Posterior vena cava (tissue), 2 donors: ENCODE measurements at regions of chr6 and their contacts with region 1.

Region 1: DNA sequence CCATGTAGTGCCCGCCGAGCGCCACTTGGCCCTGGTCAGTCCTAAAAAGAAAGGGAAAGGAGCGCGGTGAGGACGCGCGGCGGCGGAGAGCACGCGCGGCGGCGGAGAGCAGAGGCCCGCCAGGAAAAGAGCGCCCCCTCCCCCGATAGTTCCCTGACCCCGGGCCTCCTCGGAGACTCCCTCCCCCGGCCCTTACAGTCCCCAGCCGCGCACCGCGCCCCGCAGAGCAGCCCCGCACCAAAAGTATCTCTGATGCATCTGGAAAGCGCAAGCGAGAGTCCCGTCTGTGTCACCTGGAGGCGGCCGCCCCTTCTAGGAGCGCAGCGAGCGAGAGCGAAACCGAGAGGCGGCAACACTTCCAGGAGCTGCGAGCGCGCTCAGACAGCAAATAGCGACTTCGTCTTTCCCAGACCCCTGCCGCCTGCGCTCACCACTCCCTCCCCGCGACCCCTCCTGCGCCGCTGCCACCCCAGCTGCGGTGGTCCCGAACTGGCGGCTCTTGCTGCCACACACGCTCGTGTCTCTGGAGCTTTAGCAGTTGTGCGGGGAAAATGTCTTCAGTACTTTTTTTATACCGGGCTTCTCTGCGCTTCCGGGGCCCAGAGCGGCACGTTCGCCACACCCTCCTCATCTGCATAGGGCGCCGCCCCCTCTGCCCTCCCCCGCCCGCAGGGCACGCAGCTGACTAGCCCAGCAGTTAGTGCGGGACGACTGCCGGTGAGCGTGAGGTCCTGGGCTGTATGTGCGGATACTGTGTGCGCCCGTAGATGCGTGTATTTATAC is at the start of gene TENT5A:
- DNase-seq: peak; percentile 98
- total RNA-seq, gene TENT5A: 43.6 to 58.2 TPM

Region 2: DNA sequence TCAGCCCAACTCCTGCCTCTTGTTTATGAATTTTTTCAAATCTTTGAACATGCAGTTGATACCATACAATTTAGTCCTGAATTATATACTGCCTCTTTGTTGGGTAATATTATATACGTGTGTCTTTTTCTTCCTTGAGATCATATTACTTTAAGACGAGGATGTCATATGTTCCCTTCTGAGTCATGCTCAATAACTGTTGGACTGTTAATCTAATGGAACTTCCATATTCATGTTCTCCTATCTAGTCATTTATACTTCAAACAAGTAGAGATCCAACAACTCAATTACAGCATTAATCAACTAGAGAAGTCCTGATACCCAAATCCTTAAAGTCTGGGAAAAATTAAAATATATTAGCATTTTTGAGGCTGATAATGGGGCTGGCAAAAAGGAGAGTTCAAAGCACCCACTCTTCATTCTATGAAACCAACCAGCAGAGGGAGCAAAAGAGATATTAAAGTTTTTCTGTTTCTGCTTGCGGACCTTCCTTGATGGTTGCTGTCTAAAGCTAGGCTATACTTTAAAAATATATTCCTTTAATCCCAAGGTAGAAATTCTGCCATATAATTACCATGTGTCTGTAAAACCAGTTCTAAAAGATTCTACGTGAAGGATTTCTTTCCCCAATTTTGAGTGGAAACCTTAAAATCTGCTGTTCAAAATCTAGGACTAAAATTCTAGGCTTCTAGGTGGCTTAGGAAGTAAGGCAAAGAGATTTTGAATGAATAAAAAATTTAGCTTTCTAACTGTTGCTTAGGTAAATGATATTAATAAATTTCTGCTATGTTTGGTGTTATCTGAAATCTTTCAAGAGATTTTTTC is 1147.0 kb before region 1 on chr6:
- intact Hi-C with region 1: loop called in 1 of 2 experiments (anchors 10 kb)
- DNase-seq: no peak

Region 3: GRCh38 chr6:81594596-81594995 is 157.7 kb before region 1 on chr6:
- intact Hi-C with region 1: no loop called
- DNase-seq: no peak

Region 4: DNA sequence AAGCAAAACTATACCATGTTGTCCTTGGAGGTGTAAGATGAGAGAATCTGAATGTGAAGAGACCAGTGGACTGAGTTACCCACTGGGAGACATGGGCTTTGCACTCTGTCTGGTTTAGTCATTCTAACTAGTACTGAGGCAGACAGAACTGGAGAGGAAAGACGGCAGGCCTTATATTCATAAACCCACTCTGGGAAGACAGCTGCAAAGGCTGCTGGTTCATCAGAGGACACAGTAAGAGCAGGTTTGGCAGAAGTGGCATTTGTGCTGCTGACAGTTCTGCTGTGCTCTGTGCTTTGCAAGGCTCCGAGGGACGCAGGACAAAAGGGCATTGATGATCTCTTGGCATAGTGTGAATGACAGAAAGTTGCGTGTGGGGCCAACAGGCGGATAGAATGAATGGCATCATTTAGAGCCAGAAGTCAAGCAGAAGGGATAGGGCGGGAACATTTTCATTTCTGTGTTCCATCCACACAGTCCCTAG is 142.5 kb after region 1 on chr6:
- intact Hi-C with region 1: loop called in 1 of 2 experiments (anchors 5 kb)
- DNase-seq: no peak

Region 5: GRCh38 chr6:82017288-82017687 is 265.0 kb after region 1 on chr6:
- intact Hi-C with region 1: loop called in 1 of 2 experiments (anchors 10 kb)
- DNase-seq: no peak

Region 6: DNA sequence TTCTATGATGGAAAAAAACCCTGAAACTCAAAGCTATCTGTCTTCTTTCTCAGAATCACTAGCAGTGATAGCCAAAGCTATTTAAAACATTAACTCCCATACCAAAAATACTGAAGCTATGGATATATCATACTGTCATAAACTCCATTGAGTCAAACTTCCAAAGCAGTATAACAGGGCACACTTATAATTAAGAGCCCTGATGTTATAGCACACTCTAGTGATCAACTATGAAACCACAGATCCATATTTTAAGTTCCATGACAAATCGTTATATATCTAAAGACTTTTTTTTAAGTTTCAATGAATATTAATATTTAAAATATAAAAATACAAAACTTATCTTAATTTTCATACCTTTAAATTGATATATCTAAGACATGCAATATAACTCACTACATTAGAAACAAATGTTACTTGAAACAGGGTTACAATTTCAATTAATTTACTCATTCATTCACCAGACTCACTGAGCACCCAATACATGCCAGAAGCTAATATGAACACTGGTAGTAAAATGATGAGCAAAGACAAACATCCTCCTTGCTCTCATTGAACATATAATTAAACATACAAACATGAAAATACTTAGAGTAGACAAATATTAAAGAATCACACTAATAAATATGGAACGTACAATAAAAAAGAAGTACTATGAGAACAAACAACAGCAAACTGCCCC is 425.9 kb after region 1 on chr6:
- intact Hi-C with region 1: loop called in 1 of 2 experiments (anchors 10 kb)
- DNase-seq: no peak